ENCODE measurements at regions of chr2 and their contacts with region 1.

Region 1: DNA sequence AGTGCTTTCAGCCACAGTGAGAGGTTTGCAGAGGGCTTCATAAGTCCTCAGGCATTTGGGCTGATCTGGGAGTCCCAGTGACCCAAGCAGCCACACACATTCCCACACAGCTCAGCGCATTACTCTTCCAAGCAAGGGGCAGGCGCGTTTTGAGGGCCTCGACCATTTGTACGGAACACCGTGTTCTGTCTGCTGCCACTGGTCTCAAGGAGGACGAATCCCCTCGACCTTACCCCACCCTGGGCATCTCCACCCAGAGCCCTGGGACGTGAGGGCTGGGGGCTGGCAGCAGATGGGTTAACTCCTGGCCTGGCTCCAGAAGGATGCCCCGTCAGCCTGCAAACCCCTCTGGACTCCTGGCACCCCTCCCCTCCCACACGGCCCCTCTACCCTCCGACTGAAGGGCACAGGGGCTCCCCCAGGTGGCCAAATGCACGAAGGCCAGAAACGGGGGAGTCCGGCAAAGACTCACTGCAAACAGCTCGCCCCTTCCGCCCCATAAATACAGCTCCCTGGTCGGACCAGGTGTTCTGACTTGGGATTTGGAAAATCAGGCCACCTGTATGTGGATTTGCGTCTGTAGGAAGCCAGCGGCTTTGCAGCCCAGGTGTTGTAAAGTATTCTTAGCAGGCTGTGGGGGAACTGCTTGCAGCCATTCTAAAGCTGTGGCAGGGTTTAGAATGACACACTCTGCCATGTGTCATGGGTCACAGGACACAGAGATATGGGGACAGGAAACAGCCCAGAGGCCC is 33.6 kb upstream of the PTMA start:
- DNase-seq: no peak
- ATAC-seq: peak; percentile 33
- H3K4me3 ChIP-seq: peak overlapping the region; percentile 48 to 63
- H3K27ac ChIP-seq: peak overlapping the region; percentile 93
- H3K4me1 ChIP-seq: peaks cover 52 to 85% of the 10 kb centered on the region in 2 experiments
- H3K27me3 ChIP-seq: no peaks in the 10 kb centered on the region
- CTCF ChIP-seq: peak in 2 of 3 experiments; percentile 91 to 92; a peak in 4 of 6 replicates
- POLR2A ChIP-seq: no peak
- RAD21 ChIP-seq: no peak

Region 2: GRCh38 chr2:231601349-231602229 is 73.2 kb before region 1 on chr2:
- CTCF ChIA-PET with region 1: interaction called, 10 read pairs
- POLR2A ChIA-PET with region 1: interaction called, 6 read pairs
- RAD21 ChIA-PET with region 1: no interaction called
- intact Hi-C with region 1: no loop called
- DNase-seq: peak; percentile 82
- ATAC-seq: peak; percentile 76
- H3K4me3 ChIP-seq: no peak overlapping the region
- H3K27ac ChIP-seq: no peak overlapping the region; the same call in 1 of the 2 replicates
- H3K4me1 ChIP-seq: peaks cover 25 to 43% of the 10 kb centered on the region in 2 experiments
- H3K27me3 ChIP-seq: no peaks in the 10 kb centered on the region
- CTCF ChIP-seq: peak in 2 of 3 experiments; percentile 82 to 88; a peak in 4 of 6 replicates
- POLR2A ChIP-seq: no peak
- RAD21 ChIP-seq: no peak

Region 3: GRCh38 chr2:231642631-231643494 is 31.9 kb before region 1 on chr2:
- CTCF ChIA-PET with region 1: interaction called, 9 read pairs
- POLR2A ChIA-PET with region 1: interaction called, 29 read pairs
- RAD21 ChIA-PET with region 1: interaction called, 3 to 4 read pairs
- intact Hi-C with region 1: loop called (anchors 1 kb)
- DNase-seq: peak; percentile 99
- ATAC-seq: peak; percentile 82
- H3K4me3 ChIP-seq: peak overlapping the region; percentile 36 to 46
- H3K27ac ChIP-seq: peak overlapping the region; percentile 100
- H3K4me1 ChIP-seq: peaks cover 49 to 74% of the 10 kb centered on the region in 2 experiments
- H3K27me3 ChIP-seq: no peaks in the 10 kb centered on the region
- CTCF ChIP-seq: no peak
- POLR2A ChIP-seq: peak; percentile 64
- RAD21 ChIP-seq: no peak

Region 4: DNA sequence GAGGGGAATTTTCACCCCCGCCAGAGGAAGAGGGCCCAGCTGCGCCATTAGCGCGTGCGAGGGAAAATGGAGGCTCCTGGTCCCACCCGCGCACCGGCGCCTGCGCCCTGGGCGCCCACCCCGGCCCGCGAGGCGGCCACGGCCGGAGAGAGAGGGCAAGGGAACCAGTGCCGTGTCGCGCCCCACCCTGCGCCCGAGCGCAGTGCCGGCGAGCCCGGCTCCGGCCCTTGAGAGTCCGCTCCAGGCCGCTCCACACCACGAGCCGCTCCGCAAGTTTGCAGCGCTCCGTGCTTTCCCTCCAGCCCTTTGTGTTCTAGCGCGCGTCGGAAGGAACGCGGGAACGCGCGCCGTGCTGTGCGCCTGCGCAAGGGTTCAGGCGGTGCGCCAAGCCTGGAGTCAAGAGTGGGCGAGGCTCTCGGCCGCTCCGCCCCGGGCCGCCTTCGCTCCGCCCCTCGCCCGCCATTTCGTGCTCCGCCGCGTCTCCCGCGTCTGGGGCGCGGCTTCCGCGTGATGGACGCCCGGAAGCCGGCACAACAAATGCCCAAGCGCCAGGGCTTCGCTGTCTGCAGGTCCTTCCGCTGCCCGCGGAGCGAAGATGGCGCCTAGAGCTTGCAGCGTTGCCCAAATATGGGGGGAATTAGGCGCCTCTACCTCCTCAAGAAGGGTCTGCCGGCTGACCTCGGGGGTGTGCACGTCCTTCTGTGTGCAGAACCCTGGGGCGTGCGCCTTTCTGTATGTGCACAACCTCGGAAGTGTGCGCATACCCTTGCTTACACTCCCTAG is 12.5 kb before region 1 on chr2:
- CTCF ChIA-PET with region 1: interaction called, 18 read pairs
- POLR2A ChIA-PET with region 1: interaction called, 10 read pairs
- RAD21 ChIA-PET with region 1: interaction called in 1 of 2 experiments, 3 read pairs
- intact Hi-C with region 1: no loop called
- DNase-seq: peak; percentile 97
- ATAC-seq: peak; percentile 58
- H3K4me3 ChIP-seq: peak overlapping the region; percentile 56 to 62
- H3K27ac ChIP-seq: peak overlapping the region; percentile 99
- H3K4me1 ChIP-seq: peaks cover 25 to 75% of the 10 kb centered on the region in 2 experiments
- H3K27me3 ChIP-seq: no peaks in the 10 kb centered on the region
- CTCF ChIP-seq: no peak
- POLR2A ChIP-seq: no peak
- RAD21 ChIP-seq: no peak

Region 5: DNA sequence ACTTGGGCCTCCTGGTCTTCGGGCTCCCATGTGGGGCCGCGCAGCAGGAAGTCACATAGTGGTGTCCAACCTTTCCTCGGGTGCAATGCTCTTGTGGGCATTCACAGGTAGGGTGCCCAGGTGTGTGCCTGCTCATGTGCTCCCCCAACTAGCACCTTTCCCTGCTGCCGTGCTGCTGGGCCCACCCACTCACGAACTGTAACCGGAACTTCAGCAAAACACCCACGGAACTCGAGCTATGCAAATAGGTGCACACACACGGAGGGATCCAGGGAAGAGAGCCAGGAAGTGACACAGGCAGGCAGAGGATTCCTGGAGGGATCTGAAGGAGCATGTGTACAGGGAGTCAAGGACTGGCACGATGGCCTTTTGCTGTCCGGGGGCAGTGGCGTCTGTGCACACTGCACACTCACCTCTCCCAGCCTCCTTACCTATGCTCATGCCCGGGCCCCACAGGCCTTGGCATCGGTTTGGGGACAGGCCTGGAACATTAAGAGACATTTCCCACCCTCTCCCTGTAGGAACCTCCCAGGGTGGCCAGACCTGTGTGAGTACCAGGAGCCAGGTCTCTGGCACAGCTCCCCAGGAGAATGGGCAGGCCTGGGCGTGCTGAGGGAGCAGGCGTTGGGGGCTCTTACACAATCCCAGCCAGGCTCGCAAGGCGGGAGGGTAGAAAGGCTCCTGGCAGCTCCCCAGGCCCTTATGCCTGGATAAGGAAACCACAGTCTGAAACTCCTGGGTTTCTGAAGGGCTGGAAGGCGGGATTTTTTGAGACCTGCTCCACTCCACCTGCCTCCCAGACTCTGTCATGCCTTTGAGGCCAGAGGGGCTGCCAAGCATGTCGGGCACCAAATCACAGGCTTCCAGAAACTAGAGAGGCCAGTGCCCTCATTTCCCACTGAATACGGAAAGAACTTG is 27.0 kb after region 1 on chr2:
- CTCF ChIA-PET with region 1: interaction called, 29 read pairs
- POLR2A ChIA-PET with region 1: interaction called, 34 read pairs
- RAD21 ChIA-PET with region 1: no interaction called
- intact Hi-C with region 1: no loop called
- DNase-seq: no peak
- ATAC-seq: peak; percentile 45
- H3K4me3 ChIP-seq: peak overlapping the region; percentile 28 to 31
- H3K27ac ChIP-seq: peak overlapping the region; percentile 77
- H3K4me1 ChIP-seq: peaks cover 20 to 33% of the 10 kb centered on the region in 2 experiments
- H3K27me3 ChIP-seq: no peaks in the 10 kb centered on the region
- CTCF ChIP-seq: no peak
- POLR2A ChIP-seq: no peak
- RAD21 ChIP-seq: no peak

Region 6: DNA sequence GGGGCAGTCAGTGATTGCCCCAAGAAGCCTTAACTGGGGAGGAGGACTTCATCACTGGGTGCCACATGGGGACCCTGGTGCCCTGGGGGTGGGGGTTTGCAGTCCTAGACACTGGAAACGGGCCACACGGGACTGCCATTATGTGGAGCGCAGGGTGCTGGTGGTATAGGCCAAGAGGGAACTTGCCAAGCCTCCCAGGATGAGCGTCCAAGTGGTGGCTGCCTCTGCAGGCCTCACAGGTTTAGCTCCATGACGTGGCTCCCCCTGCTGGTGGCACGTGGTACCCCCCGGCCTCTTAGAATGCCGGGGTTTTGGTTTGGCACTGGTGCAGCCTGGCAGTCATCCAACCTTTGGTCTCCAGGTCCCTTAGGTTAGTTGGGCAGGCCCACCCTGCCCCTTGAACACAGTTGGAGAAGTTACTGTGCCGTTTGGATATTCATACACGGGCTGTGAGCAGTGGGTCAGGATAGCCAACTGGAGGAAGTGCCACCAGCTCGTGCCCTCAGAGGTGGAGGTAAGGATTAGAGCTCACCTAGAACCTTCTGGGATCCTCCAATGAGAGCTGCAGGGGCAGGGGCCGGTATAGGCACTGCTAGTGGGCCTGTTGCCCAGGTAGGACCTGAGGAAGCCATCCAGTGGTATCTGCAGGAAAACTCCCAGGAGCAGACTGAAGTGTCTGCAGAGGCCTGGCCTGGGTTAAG is 39.1 kb after region 1 on chr2:
- CTCF ChIA-PET with region 1: interaction called, 185 read pairs
- POLR2A ChIA-PET with region 1: interaction called, 50 read pairs
- RAD21 ChIA-PET with region 1: interaction called, 20 to 31 read pairs
- intact Hi-C with region 1: loop called (anchors 1 kb)
- DNase-seq: peak; percentile 92
- ATAC-seq: peak; percentile 57
- H3K4me3 ChIP-seq: no peak overlapping the region
- H3K27ac ChIP-seq: peak overlapping the region; percentile 68
- H3K4me1 ChIP-seq: peaks cover 27 to 70% of the 10 kb centered on the region in 2 experiments
- H3K27me3 ChIP-seq: no peaks in the 10 kb centered on the region
- CTCF ChIP-seq: peak in 2 of 3 experiments; percentile 88 to 91; a peak in 4 of 6 replicates
- POLR2A ChIP-seq: no peak
- RAD21 ChIP-seq: no peak

Region 7: GRCh38 chr2:231765496-231765929 is 90.8 kb after region 1 on chr2:
- CTCF ChIA-PET with region 1: no interaction called
- POLR2A ChIA-PET with region 1: no interaction called
- RAD21 ChIA-PET with region 1: no interaction called
- intact Hi-C with region 1: no loop called
- DNase-seq: no peak
- ATAC-seq: no peak
- H3K4me3 ChIP-seq: no peak overlapping the region
- H3K27ac ChIP-seq: no peak overlapping the region
- H3K4me1 ChIP-seq: peaks cover 0 to 11% of the 10 kb centered on the region in 2 experiments; a peak in 1 of 4 replicates
- H3K27me3 ChIP-seq: no peaks in the 10 kb centered on the region
- CTCF ChIP-seq: no peak
- POLR2A ChIP-seq: no peak
- RAD21 ChIP-seq: no peak

Region 8: GRCh38 chr2:232162186-232162585 is 487.4 kb after region 1 on chr2:
- CTCF ChIA-PET with region 1: no interaction called
- POLR2A ChIA-PET with region 1: no interaction called
- RAD21 ChIA-PET with region 1: no interaction called
- intact Hi-C with region 1: no loop called
- DNase-seq: no peak
- ATAC-seq: no peak
- H3K4me3 ChIP-seq: no peak overlapping the region
- H3K27ac ChIP-seq: no peak overlapping the region
- H3K4me1 ChIP-seq: no peaks in the 10 kb centered on the region
- H3K27me3 ChIP-seq: no peaks in the 10 kb centered on the region
- CTCF ChIP-seq: no peak
- POLR2A ChIP-seq: no peak
- RAD21 ChIP-seq: no peak